ACHN (cell line): ENCODE measurements at regions of chr18 and their contacts with region 1.

Region 1: DNA sequence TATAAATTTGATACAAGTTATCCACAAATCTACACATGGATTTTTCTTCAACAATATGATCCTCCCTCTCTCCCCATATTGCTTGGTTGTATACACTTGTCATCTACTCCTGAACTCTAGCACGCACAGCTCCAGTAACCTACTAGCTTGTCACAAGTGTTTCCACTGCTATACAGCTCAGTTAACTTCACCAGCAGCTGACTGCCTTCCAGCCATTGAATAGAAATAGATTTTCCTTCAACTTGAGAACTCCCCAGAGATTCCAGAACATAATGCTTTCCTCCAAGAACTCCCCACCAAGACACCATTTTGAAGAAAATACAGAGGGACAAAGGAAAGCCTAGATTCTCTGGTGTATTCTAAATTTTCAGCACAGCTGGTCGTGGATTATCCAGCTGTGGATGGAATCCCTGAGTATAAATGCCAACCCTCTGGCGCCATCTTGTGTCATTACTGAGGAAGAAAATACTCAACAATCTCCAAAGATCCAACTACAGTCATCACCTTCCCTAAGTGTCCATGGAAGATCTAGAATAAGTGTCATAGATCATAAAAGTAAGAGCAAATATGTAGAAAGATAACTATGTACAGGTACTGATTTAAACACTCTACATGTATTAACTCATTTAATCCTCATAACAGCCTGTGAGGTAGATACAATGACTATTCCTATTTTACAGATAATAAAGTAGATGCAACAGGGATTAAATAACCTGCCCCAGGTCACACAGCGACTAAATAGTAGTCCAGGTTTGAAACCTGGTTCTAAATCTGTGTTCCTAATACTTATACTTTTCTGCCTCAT is 156.7 kb downstream of the ARHGAP28 start:
- DNase-seq: peak; percentile 37

Region 2: GRCh38 chr18:6333981-6334380 is 552.2 kb before region 1 on chr18:
- in situ Hi-C with region 1: no loop called
- DNase-seq: no peak

Region 3: GRCh38 chr18:6543330-6543908 is 342.8 kb before region 1 on chr18:
- in situ Hi-C with region 1: loop called (anchors 25 kb)
- DNase-seq: peak; percentile 38

Region 4: DNA sequence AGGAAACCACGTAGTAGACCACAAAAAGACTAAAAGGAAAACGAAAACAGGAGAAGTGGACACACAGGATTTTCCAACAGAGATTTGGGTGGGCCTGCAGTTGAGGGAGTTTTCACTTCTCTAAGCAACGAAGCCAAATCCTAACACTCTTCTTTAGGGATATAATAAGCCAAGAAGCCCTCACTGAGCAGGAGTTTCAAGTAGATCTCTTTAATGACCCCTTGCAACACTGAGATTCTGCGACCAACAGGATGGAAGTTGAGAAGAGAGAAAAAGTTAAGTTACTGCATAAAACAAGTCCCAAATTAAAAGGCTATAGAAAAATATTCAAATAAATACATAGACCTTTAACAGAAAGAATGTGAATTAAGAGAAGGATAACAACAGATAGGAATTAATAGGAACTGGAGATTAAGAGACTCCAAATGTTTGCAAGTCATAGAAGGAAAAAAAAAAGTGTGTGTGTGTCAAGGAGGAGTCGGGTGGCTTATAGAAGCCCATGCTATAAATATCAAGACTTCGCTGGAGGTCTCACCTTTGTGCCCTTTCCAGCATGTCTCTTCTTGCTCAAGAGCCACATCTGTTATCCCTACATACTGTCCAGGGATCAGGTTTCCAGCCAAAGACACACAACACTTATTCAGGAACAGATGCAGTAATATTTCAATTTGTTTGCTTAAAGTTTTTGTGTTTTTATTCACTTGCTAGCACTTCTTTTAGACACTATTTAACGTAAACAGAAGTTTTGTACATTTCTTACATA is 226.1 kb before region 1 on chr18:
- in situ Hi-C with region 1: no loop called
- DNase-seq: no peak